Breast epithelium (tissue), 4 donors: ENCODE measurements at regions of chr16 and their contacts with region 1.

Region 1: DNA sequence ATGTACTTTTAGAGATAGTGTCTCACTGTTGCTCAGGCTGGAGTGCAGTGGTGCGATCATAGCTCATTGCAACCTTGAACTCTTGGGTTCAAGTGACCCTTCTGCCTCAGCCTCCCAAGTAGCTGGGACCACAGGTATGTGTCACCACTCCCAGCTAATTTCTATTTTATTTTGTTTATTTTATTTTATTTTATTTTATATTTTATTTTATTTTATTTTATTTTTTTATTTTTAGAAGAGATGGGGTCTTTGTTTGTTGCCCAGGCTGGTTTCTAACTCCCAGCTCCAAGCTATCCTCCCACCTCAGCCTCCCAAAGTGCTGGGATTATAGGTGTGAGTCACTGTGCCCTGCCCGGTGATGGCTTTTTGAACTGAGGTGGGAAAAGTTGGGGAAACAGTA is 35.1 kb upstream of the HS3ST4 start:
- DNase-seq: no peak
- H3K4me3 ChIP-seq: no peak overlapping the region
- H3K27ac ChIP-seq: no peak overlapping the region
- H3K4me1 ChIP-seq: no peaks in the 10 kb centered on the region
- H3K27me3 ChIP-seq: no peaks in the 10 kb centered on the region
- CTCF ChIP-seq: no peak
- POLR2A ChIP-seq: no peak

Region 2: DNA sequence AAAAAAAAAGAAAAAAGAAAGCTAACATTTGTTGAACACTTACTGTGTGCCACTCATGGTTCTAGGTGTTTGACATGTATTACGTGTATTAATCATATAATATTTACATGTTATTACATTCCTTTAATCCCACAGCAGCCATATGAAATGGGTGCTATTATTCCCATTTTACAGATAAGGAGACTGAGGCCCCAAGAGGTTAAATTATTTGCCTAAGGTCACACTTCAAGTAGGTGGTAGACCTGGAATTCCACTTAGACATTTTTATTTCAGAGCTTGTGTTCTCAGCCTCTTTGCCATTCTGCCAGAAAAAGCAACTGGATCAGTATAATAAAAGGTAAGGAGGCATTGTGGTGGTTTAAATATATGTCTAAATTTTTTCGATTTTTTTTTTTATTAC is 20.0 kb before region 1 on chr16:
- intact Hi-C with region 1: loop called (anchors 1 kb)
- DNase-seq: no peak
- H3K4me3 ChIP-seq: no peak overlapping the region
- H3K27ac ChIP-seq: no peak overlapping the region
- H3K4me1 ChIP-seq: no peaks in the 10 kb centered on the region
- H3K27me3 ChIP-seq: no peaks in the 10 kb centered on the region
- CTCF ChIP-seq: no peak
- POLR2A ChIP-seq: no peak